Prostate gland (tissue), 2 donors: ENCODE measurements at regions of chr4 and their contacts with region 1.

Region 1: DNA sequence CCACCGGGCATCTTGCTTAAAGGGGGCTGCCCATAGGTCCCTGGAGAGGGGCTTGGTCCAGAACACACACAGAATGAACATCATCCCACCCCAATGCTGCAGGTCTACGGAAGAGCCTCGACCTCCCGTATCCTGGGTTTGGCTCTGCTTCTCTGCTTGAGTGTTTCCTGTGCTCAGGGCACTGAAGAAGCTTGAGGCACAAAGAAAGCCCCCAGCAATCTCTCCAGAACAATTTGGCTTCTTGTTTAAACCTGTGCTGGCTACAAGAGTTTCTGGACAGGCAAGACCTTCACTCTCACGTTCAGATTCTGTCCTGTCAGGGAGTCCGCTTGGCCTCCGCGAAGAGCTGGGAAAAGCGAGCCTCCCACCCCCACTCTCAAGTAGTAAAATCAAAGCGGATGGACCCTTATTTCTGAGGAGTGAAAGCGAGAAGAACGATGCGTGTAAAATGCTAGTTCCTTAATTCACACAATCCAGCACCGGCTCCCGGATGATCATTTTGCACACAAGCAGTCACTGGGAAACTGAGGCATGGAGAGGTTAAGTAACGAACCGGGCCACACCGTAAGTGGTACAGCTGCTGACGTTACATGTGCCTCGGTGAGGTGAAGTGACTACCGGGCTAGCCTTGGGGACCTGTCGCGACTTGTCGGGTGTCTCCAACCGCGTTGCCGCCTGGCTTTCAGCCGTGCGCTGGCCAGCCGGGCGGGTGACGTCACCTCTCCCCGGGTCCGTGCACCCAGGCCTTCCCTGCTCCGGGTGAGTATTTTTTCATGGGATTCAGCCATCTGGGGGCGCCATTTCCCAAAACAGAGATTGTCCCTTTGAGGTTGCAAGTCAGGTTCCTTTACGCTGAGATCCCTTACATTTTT is 3.1 kb upstream of the SFRP2 start:
- DNase-seq: no peak
- H3K4me3 ChIP-seq: peak overlapping the region in 1 of 2 donors; percentile 4
- H3K27ac ChIP-seq: no peak overlapping the region
- H3K4me1 ChIP-seq: peaks cover 6% of the 10 kb centered on the region
- H3K27me3 ChIP-seq: peaks cover 26% of the 10 kb centered on the region
- CTCF ChIP-seq: peak in 3 of 4 experiments; percentile 17 to 37 (median 29)
- POLR2A ChIP-seq: no peak

Region 2: GRCh38 chr4:153528705-153529485 is 263.1 kb before region 1 on chr4:
- intact Hi-C with region 1: no loop called
- DNase-seq: no peak
- H3K4me3 ChIP-seq: no peak overlapping the region
- H3K27ac ChIP-seq: no peak overlapping the region
- H3K4me1 ChIP-seq: no peaks in the 10 kb centered on the region
- H3K27me3 ChIP-seq: no peaks in the 10 kb centered on the region
- CTCF ChIP-seq: no peak
- POLR2A ChIP-seq: no peak

Region 3: DNA sequence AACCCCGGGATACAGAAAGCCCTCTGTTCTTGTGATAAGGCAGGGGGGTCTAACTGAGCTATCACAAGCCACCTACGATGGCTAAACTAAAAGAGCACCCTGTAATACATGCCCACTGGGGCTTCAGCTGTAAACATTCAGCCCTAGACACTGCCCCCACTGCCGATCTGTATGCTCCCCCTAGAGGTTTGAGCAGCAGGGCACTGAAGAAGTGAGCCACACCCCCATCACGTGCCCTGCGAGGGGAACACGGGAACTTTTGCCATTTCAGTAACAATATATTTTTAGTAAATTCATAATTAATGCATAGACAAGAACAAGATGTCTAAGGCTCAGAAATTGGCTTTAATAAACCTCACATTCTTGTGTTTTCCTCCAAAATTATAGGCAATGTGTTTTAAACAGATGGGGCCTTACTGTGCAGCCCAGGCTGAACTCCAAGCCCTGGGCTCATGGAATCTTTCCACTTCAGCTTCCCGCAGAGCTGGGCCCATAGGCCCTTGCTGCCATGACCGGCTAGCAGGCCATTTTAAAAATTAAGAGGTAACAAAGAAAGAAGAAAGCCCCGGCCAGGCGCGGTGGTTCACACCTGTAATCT is 232.2 kb after region 1 on chr4:
- intact Hi-C with region 1: loop called (anchors 5 kb)
- DNase-seq: no peak
- H3K4me3 ChIP-seq: no peak overlapping the region
- H3K27ac ChIP-seq: no peak overlapping the region
- H3K4me1 ChIP-seq: no peaks in the 10 kb centered on the region
- H3K27me3 ChIP-seq: no peaks in the 10 kb centered on the region
- CTCF ChIP-seq: no peak
- POLR2A ChIP-seq: no peak

Region 4: GRCh38 chr4:154314248-154314647 is 522.3 kb after region 1 on chr4:
- intact Hi-C with region 1: loop called (anchors 5 kb)
- DNase-seq: no peak
- H3K4me3 ChIP-seq: no peak overlapping the region
- H3K27ac ChIP-seq: no peak overlapping the region
- H3K4me1 ChIP-seq: no peaks in the 10 kb centered on the region
- H3K27me3 ChIP-seq: no peaks in the 10 kb centered on the region
- CTCF ChIP-seq: peak in 2 of 4 experiments; percentile 7 to 15
- POLR2A ChIP-seq: no peak